Astrocyte of the cerebellum (primary cell): ENCODE measurements at regions of chr3 and their contacts with region 1.

Region 1: DNA sequence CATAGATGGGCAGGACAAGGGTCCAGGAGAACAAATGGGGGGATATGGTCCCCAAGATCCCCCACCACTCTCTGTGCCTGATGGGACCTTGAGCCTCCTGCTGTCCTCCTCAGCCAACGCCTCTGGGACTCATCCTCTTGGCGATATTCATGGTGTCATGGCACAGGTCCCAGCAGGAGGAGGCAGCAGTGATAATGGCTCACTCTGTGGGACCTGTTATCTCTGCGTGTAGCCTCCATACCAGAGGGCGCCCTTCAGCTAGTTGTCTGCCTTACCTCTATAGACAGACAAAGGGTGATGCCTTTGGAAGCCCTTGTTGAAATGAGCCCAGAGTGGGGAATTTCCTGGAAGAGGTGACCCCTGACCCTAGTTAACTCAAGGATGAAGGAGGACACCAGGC is 7.4 kb downstream of the ZBTB47 start:
- DNase-seq: no peak
- H3K4me3 ChIP-seq: no peak overlapping the region
- CTCF ChIP-seq: no peak

Region 2: DNA sequence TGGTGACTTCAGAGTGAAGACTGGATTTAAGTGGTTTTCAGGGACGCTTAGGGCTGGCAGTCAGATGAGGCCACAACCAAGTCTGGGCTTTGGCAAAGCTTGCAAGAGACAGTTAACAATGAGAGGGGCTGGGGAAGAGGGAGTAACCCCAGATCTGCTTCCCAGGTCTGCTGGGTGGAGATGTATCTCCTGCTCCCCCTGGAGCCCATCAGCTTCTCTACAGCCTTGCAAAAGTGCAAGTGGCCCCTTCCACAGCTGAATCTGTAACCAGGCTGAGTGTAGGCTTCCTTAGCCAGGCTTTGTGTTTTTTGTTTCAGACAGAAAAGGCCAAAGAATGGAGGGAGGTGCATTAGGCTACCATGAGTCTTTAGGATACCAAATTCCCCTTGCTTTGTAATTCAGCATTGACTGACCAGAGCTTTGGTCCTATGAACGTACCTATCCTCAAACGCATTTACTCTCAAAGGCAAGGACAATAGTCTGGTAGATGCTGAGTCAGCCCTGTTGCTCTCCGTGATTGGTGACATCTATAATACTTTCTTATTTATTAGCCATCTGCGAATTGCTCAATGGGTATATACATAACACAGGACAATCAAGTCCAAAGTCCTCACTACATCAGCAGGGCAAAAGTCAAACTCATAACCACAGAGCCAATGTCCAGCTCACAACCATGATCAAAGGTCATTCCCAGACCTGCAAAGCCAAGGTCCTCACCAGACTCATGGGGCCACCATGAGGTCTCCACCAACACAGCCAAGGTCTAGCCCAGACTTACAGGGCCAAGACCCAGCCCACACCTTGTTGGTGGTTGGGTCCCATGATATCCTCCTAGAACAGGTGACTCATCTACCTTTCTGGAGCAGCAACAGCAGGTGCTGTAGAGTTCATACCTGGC is 95.0 kb after region 1 on chr3:
- in situ Hi-C with region 1: loop called (anchors 5 kb)
- DNase-seq: no peak
- H3K4me3 ChIP-seq: no peak overlapping the region
- CTCF ChIP-seq: peak; percentile 66